Sigmoid colon (tissue), 7 donors: ENCODE measurements at regions of chr6 and their contacts with region 1.

Region 1: GRCh38 chr6:28683944-28684538 is 158.4 kb downstream of the GPX5 start:
- DNase-seq: no peak
- H3K4me3 ChIP-seq: no peak overlapping the region
- H3K27ac ChIP-seq: no peak overlapping the region
- H3K4me1 ChIP-seq: no peaks in the 10 kb centered on the region
- H3K27me3 ChIP-seq: peaks cover 0 to 75% (median 18%) of the 10 kb centered on the region in 3 donors
- CTCF ChIP-seq: peak in 2 of 4 experiments; percentile 17 to 25
- EP300 ChIP-seq: no peak
- POLR2A ChIP-seq: no peak

Region 2: GRCh38 chr6:28349892-28350737 is 333.9 kb before region 1 on chr6 and contains the start of gene ZKSCAN3:
- intact Hi-C with region 1: no loop called
- DNase-seq: peak; percentile 91
- H3K4me3 ChIP-seq: peak within 1 kb of the TSS; percentile 64 to 78 (median 72)
- H3K27ac ChIP-seq: peak within 1 kb of the TSS; percentile 80 to 94 (median 86)
- H3K4me1 ChIP-seq: peaks cover 0 to 38% (median 22%) of the 10 kb centered on the region in 4 donors
- H3K27me3 ChIP-seq: no peaks in the 10 kb centered on the region
- CTCF ChIP-seq: no peak
- EP300 ChIP-seq: no peak
- POLR2A ChIP-seq: peak in 1 of 2 donors; percentile 47
- total RNA-seq, gene ZKSCAN3: 5.4 to 9.1 (median 5.8) TPM

Region 3: GRCh38 chr6:29589423-29590048 is 905.5 kb after region 1 on chr6:
- intact Hi-C with region 1: loop called (anchors 5 kb)
- DNase-seq: no peak
- H3K4me3 ChIP-seq: no peak overlapping the region
- H3K27ac ChIP-seq: no peak overlapping the region
- H3K4me1 ChIP-seq: peaks cover 0 to 8% (median 5%) of the 10 kb centered on the region in 4 donors
- H3K27me3 ChIP-seq: peaks cover 0 to 6% (median 0%) of the 10 kb centered on the region in 3 donors
- CTCF ChIP-seq: peak; percentile 65 to 94 (median 78)
- EP300 ChIP-seq: no peak
- POLR2A ChIP-seq: no peak